Mammary epithelial cell (primary cell): ENCODE measurements at regions of chr11 and their contacts with region 1.

Region 1: DNA sequence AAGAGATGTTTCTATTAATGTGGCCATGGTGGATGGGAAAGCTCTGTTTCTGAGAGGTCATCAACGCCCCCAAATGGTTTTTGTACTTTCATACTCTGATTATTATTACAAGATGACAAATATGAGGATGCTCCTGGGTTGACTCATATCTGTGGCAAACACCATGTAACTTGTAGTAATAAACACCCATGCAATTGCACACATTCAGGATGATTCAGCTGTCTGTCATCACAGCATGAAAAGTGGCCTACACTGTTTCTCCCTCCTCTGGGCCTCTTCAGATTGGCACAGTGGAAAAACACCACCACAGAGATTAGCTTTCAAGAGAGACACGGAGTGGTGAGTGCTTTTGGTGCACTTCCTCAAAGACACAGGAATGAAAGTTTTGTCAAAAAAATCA is 85.4 kb downstream of the MTNR1B start:
- DNase-seq: peak; percentile 97
- H3K4me3 ChIP-seq: no peak overlapping the region
- H3K27ac ChIP-seq: peak overlapping the region; percentile 65
- H3K4me1 ChIP-seq: peaks cover 9% of the 10 kb centered on the region
- H3K27me3 ChIP-seq: no peaks in the 10 kb centered on the region
- CTCF ChIP-seq: peak in 1 of 2 donors; percentile 20

Region 2: GRCh38 chr11:92964471-92964870 is 90.4 kb before region 1 on chr11:
- CTCF ChIA-PET with region 1: no interaction called
- dilution Hi-C with region 1: no loop called
- in situ Hi-C with region 1: no loop called
- intact Hi-C with region 1: loop called (anchors 5 kb)
- DNase-seq: peak; percentile 79
- H3K4me3 ChIP-seq: no peak overlapping the region
- H3K27ac ChIP-seq: peak overlapping the region; percentile 7
- H3K4me1 ChIP-seq: peaks cover 14% of the 10 kb centered on the region
- H3K27me3 ChIP-seq: no peaks in the 10 kb centered on the region
- CTCF ChIP-seq: no peak

Region 3: DNA sequence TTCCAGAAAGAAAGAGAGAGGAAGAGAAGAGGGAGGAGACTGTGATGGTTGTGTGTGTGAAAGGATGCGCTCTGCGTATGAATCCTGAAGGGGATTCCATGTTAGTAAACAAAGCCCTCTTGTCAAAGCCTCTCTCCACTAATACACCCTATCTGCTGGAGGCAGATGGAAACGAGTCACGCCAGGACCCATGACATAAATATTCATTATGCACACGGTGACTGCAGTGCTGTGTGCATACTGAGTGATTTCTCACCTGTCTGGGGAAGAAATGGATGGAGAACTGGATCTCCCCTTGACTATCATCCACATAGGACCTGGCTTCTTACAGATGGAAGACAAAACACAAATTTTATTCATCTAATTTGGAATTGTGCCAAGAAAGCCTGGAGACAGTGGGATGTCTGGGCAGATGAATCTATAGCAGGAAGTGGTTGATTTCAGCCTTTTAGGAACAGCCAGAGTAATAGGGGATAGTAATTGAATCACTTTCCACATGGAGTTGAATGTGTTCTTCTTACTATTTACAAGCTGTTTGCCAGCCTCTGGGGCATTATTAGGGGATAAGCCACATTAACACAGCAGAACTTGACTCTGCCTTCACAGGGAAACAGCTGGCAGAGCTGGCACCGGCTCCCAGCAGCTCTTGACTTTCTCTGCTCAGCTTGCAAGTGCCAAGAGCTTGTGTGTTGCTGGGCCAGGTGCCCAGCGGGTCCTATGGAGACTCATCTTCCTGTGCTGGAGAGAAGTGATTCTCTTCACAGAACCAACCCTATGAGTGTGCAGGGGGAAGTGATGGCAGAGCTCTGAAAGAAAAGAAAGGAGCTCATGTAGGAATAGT is 76.4 kb before region 1 on chr11:
- CTCF ChIA-PET with region 1: no interaction called
- dilution Hi-C with region 1: no loop called
- in situ Hi-C with region 1: no loop called
- intact Hi-C with region 1: no loop called
- DNase-seq: peak; percentile 52
- H3K4me3 ChIP-seq: no peak overlapping the region
- H3K27ac ChIP-seq: peak overlapping the region; percentile 51
- H3K4me1 ChIP-seq: peaks cover 24% of the 10 kb centered on the region
- H3K27me3 ChIP-seq: no peaks in the 10 kb centered on the region
- CTCF ChIP-seq: no peak

Region 4: GRCh38 chr11:93000511-93001476 is 54.1 kb before region 1 on chr11:
- CTCF ChIA-PET with region 1: no interaction called
- dilution Hi-C with region 1: no loop called
- in situ Hi-C with region 1: loop called in 1 of 2 experiments (anchors 10 kb)
- intact Hi-C with region 1: loop called (anchors 1 kb)
- DNase-seq: peak; percentile 90
- H3K4me3 ChIP-seq: no peak overlapping the region
- H3K27ac ChIP-seq: peak overlapping the region; percentile 89
- H3K4me1 ChIP-seq: peaks cover 25% of the 10 kb centered on the region
- H3K27me3 ChIP-seq: no peaks in the 10 kb centered on the region
- CTCF ChIP-seq: no peak

Region 5: DNA sequence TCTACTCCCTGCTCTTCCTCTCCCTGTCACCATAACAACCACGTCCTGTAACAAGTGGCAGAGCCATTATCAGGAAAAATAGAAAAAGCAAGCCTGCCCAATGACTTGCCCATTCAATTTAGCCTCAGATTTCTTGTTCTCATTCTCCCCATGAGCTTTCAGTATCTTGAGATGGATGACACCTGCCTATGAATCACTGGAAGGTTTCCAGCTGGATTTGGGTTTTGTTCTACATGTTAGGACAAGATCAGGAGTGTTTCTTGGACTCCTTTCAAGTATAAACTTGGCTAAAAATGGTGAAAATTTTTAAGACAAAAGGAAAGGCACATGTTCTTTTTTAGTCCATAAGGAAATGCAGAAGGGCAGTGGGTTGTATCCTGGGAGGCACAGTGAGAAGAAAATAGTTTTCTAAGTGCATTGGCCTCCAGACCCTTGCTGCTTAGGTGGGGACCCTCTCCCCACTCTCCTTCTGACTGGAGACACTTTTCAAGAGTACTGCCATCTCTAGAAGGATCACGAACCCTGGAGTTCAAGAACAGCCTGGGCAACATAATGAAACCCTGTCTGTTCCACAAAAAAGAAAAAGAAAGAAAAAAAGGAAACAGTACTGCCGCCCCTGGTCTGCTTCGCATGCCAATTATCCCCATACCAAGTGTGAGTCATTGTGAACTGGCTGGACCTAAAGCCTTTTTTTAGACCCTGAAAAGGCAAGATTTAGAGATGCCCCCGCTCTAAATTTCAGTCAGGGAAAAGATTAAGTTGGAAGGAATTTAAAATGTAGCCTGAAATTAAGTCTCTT is 34.4 kb before region 1 on chr11:
- CTCF ChIA-PET with region 1: interaction called, 4 read pairs
- dilution Hi-C with region 1: no loop called
- in situ Hi-C with region 1: no loop called
- intact Hi-C with region 1: loop called (anchors 1 kb)
- DNase-seq: peak; percentile 98
- H3K4me3 ChIP-seq: peak overlapping the region; percentile 6 to 30 (median 28)
- H3K27ac ChIP-seq: peak overlapping the region; percentile 98
- H3K4me1 ChIP-seq: peaks cover 34% of the 10 kb centered on the region
- H3K27me3 ChIP-seq: no peaks in the 10 kb centered on the region
- CTCF ChIP-seq: no peak

Region 6: GRCh38 chr11:93032580-93032979 is 22.3 kb before region 1 on chr11:
- CTCF ChIA-PET with region 1: no interaction called
- dilution Hi-C with region 1: no loop called
- in situ Hi-C with region 1: no loop called
- intact Hi-C with region 1: loop called (anchors 1 kb)
- DNase-seq: peak; percentile 58
- H3K4me3 ChIP-seq: no peak overlapping the region
- H3K27ac ChIP-seq: peak overlapping the region; percentile 65
- H3K4me1 ChIP-seq: peaks cover 27% of the 10 kb centered on the region
- H3K27me3 ChIP-seq: no peaks in the 10 kb centered on the region
- CTCF ChIP-seq: no peak